Activated CD8-positive, alpha-beta memory T cell treated with anti-CD3 and anti-CD28 coated beads, Interleukin-2, amount 10 ng/mL, durations not matched to agents 7 days and 5 days (primary cell): ENCODE measurements at regions of chr5 and their contacts with region 1.

Region 1: DNA sequence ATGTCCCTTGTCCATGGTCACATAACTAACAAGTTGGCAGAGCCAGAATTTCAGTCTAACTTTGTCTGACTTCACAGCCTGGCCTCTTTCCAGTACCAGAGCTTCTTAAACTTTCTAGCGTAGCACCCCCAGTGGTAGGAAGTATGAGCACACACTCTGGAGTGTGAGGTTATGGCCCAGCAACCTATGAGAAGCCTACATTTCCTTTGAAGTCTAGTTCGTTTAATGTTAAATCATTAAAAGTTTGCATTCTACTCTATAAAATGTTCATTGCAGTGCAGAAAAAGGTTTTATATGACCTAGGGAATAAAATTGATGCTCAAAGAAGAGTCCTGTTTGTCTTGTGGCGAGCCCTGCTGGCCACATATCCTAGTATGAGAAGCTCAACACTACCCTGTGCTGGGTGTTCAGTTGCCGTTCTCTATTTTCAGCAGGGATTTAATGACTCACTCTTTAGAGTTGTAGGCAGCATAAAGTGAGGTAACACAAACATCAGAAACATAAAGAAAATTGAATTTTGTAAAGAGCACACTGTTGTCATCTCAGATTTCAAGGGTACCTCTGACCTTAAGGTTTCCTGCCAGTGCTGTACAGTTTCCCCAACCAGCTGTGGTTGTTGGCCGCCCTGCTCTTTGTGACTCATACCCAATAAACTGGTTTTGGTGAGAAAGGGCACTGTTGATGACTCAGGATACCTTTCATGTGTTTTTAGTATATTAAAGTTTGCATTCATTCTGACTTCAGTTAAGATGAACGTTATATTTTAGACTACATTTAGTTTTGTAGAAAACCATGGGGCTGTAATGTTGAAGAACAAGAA is 14.3 kb downstream of the MCCC2 start:
- DNase-seq: peak; percentile 93
- ATAC-seq: peak; percentile 92
- H3K4me3 Mint-ChIP-seq: peak overlapping the region; percentile 42
- H3K27ac Mint-ChIP-seq: peak overlapping the region; percentile 99
- H3K4me1 Mint-ChIP-seq: peaks cover 42% of the 10 kb centered on the region
- H3K27me3 Mint-ChIP-seq: no peaks in the 10 kb centered on the region

Region 2: DNA sequence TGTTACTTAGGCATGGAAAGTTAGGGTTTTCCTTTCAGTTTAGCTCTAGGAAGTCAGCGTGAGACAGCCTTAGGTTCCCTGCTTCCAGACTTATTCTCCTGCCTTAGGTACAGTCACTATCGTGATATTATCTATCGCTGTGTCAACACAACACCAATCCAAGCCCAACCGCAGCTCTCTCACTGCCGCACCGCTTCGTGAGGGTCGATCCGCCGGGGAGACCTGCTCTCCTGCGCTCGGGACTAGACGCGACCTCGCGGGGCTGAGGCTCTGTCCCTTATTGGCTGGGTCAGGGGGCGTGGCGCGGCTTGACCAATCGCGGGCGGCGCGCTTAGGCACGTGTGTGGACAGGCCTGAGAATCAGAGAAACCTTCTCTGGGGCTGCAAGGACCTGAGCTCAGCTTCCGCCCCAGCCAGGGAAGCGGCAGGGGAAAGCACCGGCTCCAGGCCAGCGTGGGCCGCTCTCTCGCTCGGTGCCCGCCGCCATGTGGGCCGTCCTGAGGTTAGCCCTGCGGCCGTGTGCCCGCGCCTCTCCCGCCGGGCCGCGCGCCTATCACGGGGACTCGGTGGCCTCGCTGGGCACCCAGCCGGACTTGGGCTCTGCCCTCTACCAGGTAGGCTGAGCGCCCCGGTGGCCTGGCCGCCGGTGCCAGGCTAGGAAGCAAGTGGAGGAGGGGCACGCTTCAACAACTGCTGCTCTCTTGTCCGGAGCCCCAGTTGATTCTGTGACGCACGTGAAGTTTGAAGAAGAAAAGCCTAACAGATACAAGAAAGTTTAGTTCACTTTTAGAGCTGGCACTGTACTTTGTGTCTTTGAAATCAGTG is 14.3 kb before region 1 on chr5 and contains the start of gene MCCC2:
- CTCF ChIA-PET with region 1: interaction called, 76 read pairs
- DNase-seq: peak; percentile 99
- ATAC-seq: peak; percentile 99
- H3K4me3 Mint-ChIP-seq: peak within 1 kb of the TSS; percentile 80
- H3K27ac Mint-ChIP-seq: peak within 1 kb of the TSS; percentile 96
- H3K4me1 Mint-ChIP-seq: peaks cover 31% of the 10 kb centered on the region
- H3K27me3 Mint-ChIP-seq: no peaks in the 10 kb centered on the region
- total RNA-seq, gene MCCC2: 45.7 to 59.0 TPM

Region 3: GRCh38 chr5:71633255-71634155 is 32.1 kb after region 1 on chr5:
- CTCF ChIA-PET with region 1: no interaction called
- DNase-seq: no peak
- ATAC-seq: no peak
- H3K4me3 Mint-ChIP-seq: no peak overlapping the region
- H3K27ac Mint-ChIP-seq: no peak overlapping the region
- H3K4me1 Mint-ChIP-seq: no peaks in the 10 kb centered on the region
- H3K27me3 Mint-ChIP-seq: no peaks in the 10 kb centered on the region